ENCODE measurements at regions of chr9 and their contacts with region 1.

Region 1: GRCh38 chr9:124617471-124618141 is 110.4 kb upstream of the NR5A1 start:
- DNase-seq: peak; percentile 84
- H3K4me3 Mint-ChIP-seq: no peak overlapping the region
- H3K27ac Mint-ChIP-seq: no peak overlapping the region
- H3K4me1 Mint-ChIP-seq: no peaks in the 10 kb centered on the region
- H3K27me3 Mint-ChIP-seq: peaks cover 14% of the 10 kb centered on the region

Region 2: GRCh38 chr9:124551472-124552272 is 65.9 kb before region 1 on chr9:
- CTCF ChIA-PET with region 1: interaction called, 29 read pairs
- DNase-seq: peak; percentile 52
- H3K4me3 Mint-ChIP-seq: no peak overlapping the region
- H3K27ac Mint-ChIP-seq: no peak overlapping the region
- H3K4me1 Mint-ChIP-seq: peaks cover 7% of the 10 kb centered on the region
- H3K27me3 Mint-ChIP-seq: peaks cover 5% of the 10 kb centered on the region

Region 3: DNA sequence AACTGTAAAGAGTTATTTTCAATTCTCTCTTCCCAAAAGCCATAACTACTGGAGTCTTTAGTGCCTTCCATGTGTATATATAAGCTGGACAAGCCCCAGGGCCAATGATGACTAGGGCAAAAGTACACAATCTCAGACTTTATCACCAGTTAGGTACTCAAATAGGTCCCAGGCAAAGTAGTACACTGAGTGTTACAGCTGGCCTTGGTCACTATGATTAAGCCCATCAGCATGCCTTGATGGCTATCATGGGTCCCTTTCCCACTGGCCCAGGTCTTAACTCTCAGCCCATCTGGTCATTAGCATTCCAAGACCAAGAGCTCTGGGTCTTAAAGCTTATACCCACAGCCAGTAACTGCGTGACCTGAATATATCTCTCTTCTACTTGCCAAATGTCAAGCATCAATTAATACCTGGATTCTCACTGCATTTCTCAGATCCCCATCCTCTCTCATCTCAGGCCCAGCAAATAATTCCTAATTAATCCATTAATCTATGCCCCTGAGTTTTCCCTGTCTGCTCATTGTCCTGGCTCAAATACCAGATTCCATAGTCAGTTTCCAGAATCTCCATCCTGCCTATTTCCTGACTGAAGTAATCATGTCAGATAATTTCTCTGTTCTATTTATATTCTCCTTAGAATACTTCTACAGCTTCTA is 91.2 kb after region 1 on chr9:
- CTCF ChIA-PET with region 1: interaction called, 130 read pairs
- DNase-seq: no peak
- H3K4me3 Mint-ChIP-seq: no peak overlapping the region
- H3K27ac Mint-ChIP-seq: no peak overlapping the region
- H3K4me1 Mint-ChIP-seq: no peaks in the 10 kb centered on the region
- H3K27me3 Mint-ChIP-seq: peaks cover 12% of the 10 kb centered on the region

Region 4: DNA sequence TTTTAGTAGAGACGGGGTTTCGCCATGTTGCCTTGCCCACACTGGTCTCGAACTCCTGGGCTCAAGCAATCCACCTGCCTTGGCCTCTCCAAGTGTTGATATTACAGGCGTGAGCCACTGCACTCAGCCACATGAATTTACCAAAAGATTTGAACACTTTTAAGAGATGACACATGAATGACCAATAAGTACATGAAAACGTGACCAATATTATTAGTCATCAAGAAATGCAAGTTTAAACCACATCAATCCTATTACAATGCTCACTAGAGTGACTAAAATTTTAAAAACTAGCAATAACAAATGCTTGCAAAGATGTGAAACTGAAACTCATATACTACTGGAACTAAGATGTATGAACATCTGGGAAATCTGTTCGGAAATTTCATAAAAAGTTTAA is 99.2 kb after region 1 on chr9:
- CTCF ChIA-PET with region 1: interaction called, 130 read pairs
- DNase-seq: no peak
- H3K4me3 Mint-ChIP-seq: no peak overlapping the region
- H3K27ac Mint-ChIP-seq: no peak overlapping the region
- H3K4me1 Mint-ChIP-seq: no peaks in the 10 kb centered on the region
- H3K27me3 Mint-ChIP-seq: peaks cover 3% of the 10 kb centered on the region